H1 (cell line): ENCODE measurements at regions of chr16 and their contacts with region 1.

Region 1: DNA sequence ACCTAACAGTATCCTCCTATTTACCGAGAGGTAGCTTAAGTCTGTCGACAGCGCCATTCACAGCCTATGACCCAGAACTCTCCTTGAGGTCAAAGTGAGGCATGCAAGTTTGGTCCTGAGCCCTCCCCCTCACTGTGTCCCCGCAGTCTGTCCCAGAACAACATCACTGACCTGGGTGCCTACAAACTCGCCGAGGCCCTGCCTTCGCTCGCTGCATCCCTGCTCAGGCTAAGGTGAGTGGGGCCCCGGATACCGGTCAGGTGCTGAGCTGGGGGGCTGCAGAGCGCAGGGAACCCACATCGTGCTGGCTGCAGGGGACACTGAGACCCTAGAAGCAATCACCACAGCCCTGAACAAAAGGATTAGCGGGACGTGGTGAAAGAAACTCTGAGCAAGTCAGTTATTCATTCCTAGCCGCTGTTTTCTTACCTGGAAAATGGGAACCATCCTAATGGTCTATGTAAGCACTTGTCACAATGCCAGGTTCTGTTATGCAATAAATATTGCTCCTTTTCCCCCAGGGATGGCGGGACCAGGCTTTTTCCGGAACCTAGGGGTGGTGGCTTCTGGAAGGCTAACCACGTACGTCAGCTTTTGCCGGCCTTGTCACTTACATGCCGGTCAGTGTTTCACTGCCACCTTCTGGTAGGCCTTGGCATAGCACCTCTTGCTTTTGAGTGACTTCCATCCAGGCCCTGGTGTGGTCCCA is 23.8 kb downstream of the DEXI start:
- DNase-seq: peak; percentile 91 to 97
- H3K4me3 ChIP-seq: 0 out of 8 replicates have a peak overlapping the region, but pooled peaks of 1 of the 4 experiments have one; percentile 0
- H3K27ac ChIP-seq: no peak overlapping the region
- H3K4me1 ChIP-seq: peaks cover 0 to 8% (median 0%) of the 10 kb centered on the region in 4 experiments; a peak in 2 of 7 replicates
- H3K27me3 ChIP-seq: peaks cover 0 to 3% (median 0%) of the 10 kb centered on the region in 4 experiments; a peak in 1 of 7 replicates
- CTCF ChIP-seq: peak; percentile 85 to 100 (median 96)
- EP300 ChIP-seq: no peak
- POLR2A ChIP-seq: no peak
- RAD21 ChIP-seq: peak; percentile 96

Region 2: GRCh38 chr16:10752843-10753523 is 165.5 kb before region 1 on chr16:
- CTCF ChIA-PET with region 1: interaction called, 17 read pairs
- POLR2A ChIA-PET with region 1: no interaction called
- DNase-seq: no peak
- H3K4me3 ChIP-seq: no peak overlapping the region
- H3K27ac ChIP-seq: no peak overlapping the region
- H3K4me1 ChIP-seq: no peaks in the 10 kb centered on the region
- H3K27me3 ChIP-seq: no peaks in the 10 kb centered on the region
- CTCF ChIP-seq: no peak
- EP300 ChIP-seq: no peak
- POLR2A ChIP-seq: no peak
- RAD21 ChIP-seq: no peak

Region 3: GRCh38 chr16:10876799-10877341 is 41.6 kb before region 1 on chr16 and contains the start of gene CIITA:
- CTCF ChIA-PET with region 1: interaction called, 29 read pairs
- POLR2A ChIA-PET with region 1: interaction called, 3 read pairs
- DNase-seq: no peak
- H3K4me3 ChIP-seq: no peak within 1 kb of the TSS
- H3K27ac ChIP-seq: no peak within 1 kb of the TSS
- H3K4me1 ChIP-seq: peaks cover 0 to 9% (median 1%) of the 10 kb centered on the region in 4 experiments; a peak in 3 of 7 replicates
- H3K27me3 ChIP-seq: peaks cover 4 to 33% (median 28%) of the 10 kb centered on the region in 4 experiments
- CTCF ChIP-seq: no peak
- EP300 ChIP-seq: no peak
- POLR2A ChIP-seq: no peak
- RAD21 ChIP-seq: no peak
- total RNA-seq, gene CIITA: 0.06 and 0.07 TPM in 2 replicates

Region 4: DNA sequence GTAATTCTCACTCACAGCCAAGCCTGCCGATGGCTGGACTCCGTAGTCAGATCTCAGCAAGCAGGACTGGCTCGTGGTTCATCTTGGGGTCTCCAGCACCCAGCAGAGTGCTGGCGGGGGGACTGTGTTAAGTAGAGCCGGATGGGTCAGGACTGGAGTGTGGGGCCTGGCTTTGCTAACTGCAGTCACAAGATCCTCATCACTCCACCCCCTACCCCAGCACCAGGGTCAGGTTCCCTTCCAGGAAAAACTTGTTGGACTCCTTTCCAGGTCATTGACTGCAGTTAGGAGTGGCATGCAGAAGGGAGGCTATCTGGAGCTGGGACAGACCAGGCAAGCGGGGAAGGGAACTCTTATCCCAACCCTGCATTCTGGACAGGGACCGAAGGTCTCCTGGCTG is 35.4 kb before region 1 on chr16:
- CTCF ChIA-PET with region 1: interaction called, 29 read pairs
- POLR2A ChIA-PET with region 1: interaction called, 3 read pairs
- DNase-seq: no peak
- H3K4me3 ChIP-seq: no peak overlapping the region
- H3K27ac ChIP-seq: no peak overlapping the region
- H3K4me1 ChIP-seq: peaks cover 0 to 4% (median 2%) of the 10 kb centered on the region in 4 experiments; a peak in 3 of 7 replicates
- H3K27me3 ChIP-seq: peaks cover 4 to 27% (median 23%) of the 10 kb centered on the region in 4 experiments
- CTCF ChIP-seq: no peak
- EP300 ChIP-seq: no peak
- POLR2A ChIP-seq: no peak
- RAD21 ChIP-seq: no peak

Region 5: GRCh38 chr16:10895053-10895946 is 23.1 kb before region 1 on chr16:
- CTCF ChIA-PET with region 1: interaction called, 20 read pairs
- POLR2A ChIA-PET with region 1: no interaction called
- DNase-seq: peak; percentile 38 to 92
- H3K4me3 ChIP-seq: no peak overlapping the region
- H3K27ac ChIP-seq: no peak overlapping the region
- H3K4me1 ChIP-seq: peaks cover 0 to 3% (median 0%) of the 10 kb centered on the region in 4 experiments; a peak in 2 of 7 replicates
- H3K27me3 ChIP-seq: no peaks in the 10 kb centered on the region; a peak in 1 of 7 replicates
- CTCF ChIP-seq: no peak
- EP300 ChIP-seq: 0 out of 3 replicates have a peak, but pooled peaks of 1 of the 2 experiments have one; percentile 14
- POLR2A ChIP-seq: no peak
- RAD21 ChIP-seq: no peak

Region 6: DNA sequence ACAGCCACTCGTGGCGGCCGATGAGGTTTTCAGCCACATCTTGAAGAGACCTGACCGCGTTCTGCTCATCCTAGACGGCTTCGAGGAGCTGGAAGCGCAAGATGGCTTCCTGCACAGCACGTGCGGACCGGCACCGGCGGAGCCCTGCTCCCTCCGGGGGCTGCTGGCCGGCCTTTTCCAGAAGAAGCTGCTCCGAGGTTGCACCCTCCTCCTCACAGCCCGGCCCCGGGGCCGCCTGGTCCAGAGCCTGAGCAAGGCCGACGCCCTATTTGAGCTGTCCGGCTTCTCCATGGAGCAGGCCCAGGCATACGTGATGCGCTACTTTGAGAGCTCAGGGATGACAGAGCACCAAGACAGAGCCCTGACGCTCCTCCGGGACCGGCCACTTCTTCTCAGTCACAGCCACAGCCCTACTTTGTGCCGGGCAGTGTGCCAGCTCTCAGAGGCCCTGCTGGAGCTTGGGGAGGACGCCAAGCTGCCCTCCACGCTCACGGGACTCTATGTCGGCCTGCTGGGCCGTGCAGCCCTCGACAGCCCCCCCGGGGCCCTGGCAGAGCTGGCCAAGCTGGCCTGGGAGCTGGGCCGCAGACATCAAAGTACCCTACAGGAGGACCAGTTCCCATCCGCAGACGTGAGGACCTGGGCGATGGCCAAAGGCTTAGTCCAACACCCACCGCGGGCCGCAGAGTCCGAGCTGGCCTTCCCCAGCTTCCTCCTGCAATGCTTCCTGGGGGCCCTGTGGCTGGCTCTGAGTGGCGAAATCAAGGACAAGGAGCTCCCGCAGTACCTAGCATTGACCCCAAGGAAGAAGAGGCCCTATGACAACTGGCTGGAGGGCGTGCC is 11.3 kb before region 1 on chr16:
- CTCF ChIA-PET with region 1: interaction called, 82 read pairs
- POLR2A ChIA-PET with region 1: interaction called, 7 read pairs
- DNase-seq: no peak
- H3K4me3 ChIP-seq: no peak overlapping the region
- H3K27ac ChIP-seq: no peak overlapping the region
- H3K4me1 ChIP-seq: no peaks in the 10 kb centered on the region
- H3K27me3 ChIP-seq: no peaks in the 10 kb centered on the region; a peak in 1 of 7 replicates
- CTCF ChIP-seq: no peak
- EP300 ChIP-seq: no peak
- POLR2A ChIP-seq: no peak
- RAD21 ChIP-seq: no peak